H1 (cell line): ENCODE measurements at regions of chr14 and their contacts with region 1.

Region 1: DNA sequence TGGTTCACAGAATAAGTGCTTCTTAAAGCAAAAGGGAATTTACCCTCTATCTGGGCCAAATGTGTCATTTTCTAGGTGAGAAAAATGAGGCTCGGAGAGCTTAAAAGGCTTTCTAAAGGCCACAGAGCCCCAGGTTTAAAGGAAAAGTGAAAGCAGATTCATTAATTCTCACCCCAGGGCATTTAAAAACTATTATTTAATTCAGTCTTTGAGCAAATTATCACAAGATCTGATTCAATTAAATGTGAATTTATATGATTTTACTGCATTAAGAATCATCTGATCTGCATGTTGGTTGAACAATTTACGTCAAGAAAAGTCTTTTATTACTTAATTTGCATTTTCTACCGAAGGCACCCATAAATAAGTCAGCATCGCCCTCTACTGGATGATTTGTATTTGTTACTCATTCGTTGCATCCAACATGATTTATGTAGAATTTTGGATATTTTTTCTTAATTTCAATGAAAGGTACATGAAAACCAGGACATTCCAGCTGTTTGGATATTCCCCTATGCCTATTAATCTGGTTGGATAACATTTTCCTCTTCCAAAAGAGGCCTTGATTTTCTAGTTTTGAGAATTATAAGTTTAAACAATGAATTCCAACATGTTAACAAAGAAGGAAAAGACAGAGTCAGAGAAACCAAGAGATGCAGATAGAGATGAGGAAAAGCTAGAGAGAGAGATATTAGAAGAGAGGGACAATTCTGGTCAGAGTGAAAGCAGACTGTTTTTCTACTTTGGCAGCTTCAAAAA is 19.1 kb upstream of the DHRS7 start:
- DNase-seq: no peak
- H3K4me3 ChIP-seq: peak overlapping the region in 1 of 4 experiments; percentile 42; a peak in 2 of 8 replicates
- H3K27ac ChIP-seq: no peak overlapping the region
- H3K4me1 ChIP-seq: peaks cover 0 to 3% (median 0%) of the 10 kb centered on the region in 4 experiments; a peak in 1 of 7 replicates
- H3K27me3 ChIP-seq: no peaks in the 10 kb centered on the region
- CTCF ChIP-seq: peak in 2 of 3 experiments; percentile 40 to 59; a peak in 2 of 4 replicates
- EP300 ChIP-seq: no peak
- POLR2A ChIP-seq: no peak
- RAD21 ChIP-seq: peak; percentile 83 to 87

Region 2: GRCh38 chr14:60064491-60065072 is 119.7 kb before region 1 on chr14:
- CTCF ChIA-PET with region 1: interaction called, 36 read pairs
- POLR2A ChIA-PET with region 1: no interaction called
- DNase-seq: no peak
- H3K4me3 ChIP-seq: no peak overlapping the region
- H3K27ac ChIP-seq: no peak overlapping the region
- H3K4me1 ChIP-seq: no peaks in the 10 kb centered on the region
- H3K27me3 ChIP-seq: no peaks in the 10 kb centered on the region
- CTCF ChIP-seq: peak in 1 of 3 experiments; percentile 33; a peak in 2 of 4 replicates
- EP300 ChIP-seq: no peak
- POLR2A ChIP-seq: no peak
- RAD21 ChIP-seq: peak in 1 of 2 experiments; percentile 60; a peak in 3 of 4 replicates

Region 3: DNA sequence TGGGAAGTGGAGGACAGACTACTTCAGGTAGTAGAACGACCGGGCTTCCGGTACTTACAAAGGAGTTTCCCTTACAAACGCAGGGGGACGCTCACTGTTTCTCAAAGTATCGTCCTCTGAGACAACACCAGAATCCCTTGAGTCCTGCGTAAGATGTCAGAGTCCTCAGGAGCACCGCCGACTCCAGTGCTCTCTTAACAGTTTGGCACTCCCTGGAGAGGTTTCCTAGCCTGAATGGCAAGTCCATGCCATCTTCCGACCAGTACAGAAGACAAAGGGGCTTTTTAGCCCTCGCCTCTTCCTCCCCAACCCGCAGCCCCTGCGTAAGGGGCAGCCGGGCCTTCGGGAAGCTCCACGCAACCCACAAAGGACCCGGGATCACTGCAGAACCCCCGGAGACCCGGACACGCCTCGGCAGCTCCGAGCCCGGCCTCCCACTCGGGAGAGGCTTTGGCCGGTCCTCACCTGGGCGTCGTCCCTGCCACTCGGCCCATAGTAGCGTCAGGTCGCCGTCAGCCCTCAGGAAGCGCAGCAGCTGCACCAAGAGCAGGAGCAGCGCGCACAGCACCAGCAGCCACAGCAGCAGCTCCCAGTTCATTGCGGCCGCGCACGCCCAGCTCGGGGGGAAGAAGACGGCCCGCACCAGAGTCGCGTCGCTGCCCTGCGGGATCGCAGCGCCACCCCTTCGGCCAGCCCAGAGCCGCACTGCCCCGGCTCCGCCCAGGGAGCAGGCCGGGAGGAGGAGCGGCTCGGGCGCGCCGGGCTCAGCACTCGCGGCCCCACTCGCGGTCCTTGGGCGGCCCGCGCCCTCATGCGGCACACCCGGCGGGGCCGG is 19.4 kb before region 1 on chr14 and contains the start of gene DHRS7:
- CTCF ChIA-PET with region 1: interaction called, 13 read pairs
- POLR2A ChIA-PET with region 1: interaction called, 3 read pairs
- DNase-seq: peak; percentile 21 to 79
- H3K4me3 ChIP-seq: peak within 1 kb of the TSS; percentile 73 to 91 (median 77)
- H3K27ac ChIP-seq: no peak within 1 kb of the TSS
- H3K4me1 ChIP-seq: peaks cover 4 to 13% (median 5%) of the 10 kb centered on the region in 4 experiments; a peak in 3 of 7 replicates
- H3K27me3 ChIP-seq: no peaks in the 10 kb centered on the region; a peak in 2 of 7 replicates
- CTCF ChIP-seq: peak in 2 of 3 experiments; percentile 14 to 16; a peak in 2 of 4 replicates
- EP300 ChIP-seq: no peak
- POLR2A ChIP-seq: peak in 1 of 2 experiments; percentile 61; a peak in 2 of 3 replicates
- RAD21 ChIP-seq: peak; percentile 7 to 45; a peak in 3 of 4 replicates
- total RNA-seq, gene DHRS7: 26.1 and 27.5 TPM in 2 replicates

Region 4: DNA sequence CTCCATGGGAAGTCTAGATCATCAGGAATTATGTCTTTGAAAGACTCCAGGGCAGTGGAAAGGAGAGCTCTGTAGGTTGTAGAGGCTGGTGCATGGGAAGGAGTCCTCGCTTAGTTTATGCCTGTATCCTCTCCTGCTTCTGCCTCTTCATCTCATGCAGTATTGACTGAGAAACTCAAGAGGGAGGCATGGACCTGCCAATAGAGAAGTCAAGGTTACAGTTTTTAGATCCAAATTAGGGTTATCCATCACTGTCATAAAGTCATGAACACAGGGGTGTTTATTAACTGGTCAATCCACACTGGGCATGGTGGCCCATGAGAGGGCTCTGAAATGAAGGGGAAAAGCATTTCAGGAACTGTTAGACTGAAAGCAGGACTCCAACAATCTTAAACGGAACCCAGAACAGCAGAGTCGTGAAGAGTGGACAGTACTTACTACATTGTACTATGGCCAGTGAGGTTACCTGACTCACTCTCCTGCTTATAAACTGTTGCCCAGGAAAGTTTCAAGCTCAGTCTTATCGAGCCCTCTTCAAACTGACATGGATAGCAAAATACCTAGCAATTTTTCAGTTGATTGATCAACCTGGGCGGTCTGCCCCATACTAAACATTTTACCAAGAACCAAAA is 11.0 kb after region 1 on chr14:
- CTCF ChIA-PET with region 1: interaction called, 29 read pairs
- POLR2A ChIA-PET with region 1: no interaction called
- DNase-seq: no peak
- H3K4me3 ChIP-seq: no peak overlapping the region
- H3K27ac ChIP-seq: no peak overlapping the region
- H3K4me1 ChIP-seq: peaks cover 0 to 3% (median 1%) of the 10 kb centered on the region in 4 experiments; a peak in 3 of 7 replicates
- H3K27me3 ChIP-seq: no peaks in the 10 kb centered on the region
- CTCF ChIP-seq: peak in 2 of 3 experiments; percentile 19 to 56; a peak in 2 of 4 replicates
- EP300 ChIP-seq: no peak
- POLR2A ChIP-seq: no peak
- RAD21 ChIP-seq: peak; percentile 76